ENCODE measurements at regions of chr1 and their contacts with region 1.

Region 1: DNA sequence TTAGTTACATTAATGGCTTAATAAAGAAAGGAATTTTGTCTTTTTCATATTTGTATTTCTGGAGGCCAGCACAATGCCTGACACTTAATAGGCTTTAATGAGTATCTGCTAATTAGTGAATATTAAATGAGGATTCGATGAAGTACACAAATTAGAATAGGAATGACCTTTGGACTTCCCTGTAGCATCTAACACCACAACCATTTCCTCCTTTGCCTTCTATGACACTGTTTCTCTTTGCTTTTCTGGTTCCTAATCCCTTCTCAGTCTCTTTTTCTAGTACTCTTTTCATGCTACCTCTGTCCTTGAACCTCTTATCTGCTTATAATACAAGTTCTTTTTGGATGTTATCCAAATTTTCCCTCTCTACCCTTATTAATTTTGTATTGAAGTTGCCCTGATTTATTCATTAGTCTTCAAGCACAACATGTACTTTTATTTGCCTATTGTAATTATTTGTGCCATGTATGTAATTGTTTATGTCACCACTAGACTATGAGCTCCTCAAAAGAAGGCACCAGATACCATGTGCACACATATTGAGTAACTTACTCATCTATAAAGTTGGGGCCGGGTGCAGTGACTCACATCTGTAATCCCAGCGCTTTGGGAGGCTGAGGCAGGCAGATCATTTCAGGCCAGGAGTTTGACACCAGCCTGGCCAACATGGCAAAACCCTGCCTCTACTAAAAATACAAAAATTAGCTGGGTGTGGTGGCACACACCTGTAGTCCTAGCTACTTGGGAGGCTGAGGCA is 23.8 kb downstream of the RPS27 start:
- DNase-seq: peak in 4 of 7 donors; percentile 30 to 61 (median 43)
- H3K4me3 ChIP-seq: no peak overlapping the region
- H3K27ac ChIP-seq: no peak overlapping the region
- H3K4me1 ChIP-seq: no peaks in the 10 kb centered on the region
- H3K27me3 ChIP-seq: no peaks in the 10 kb centered on the region
- CTCF ChIP-seq: peak in 3 of 6 experiments; percentile 8 to 22 (median 16)
- POLR2A ChIP-seq: no peak

Region 2: GRCh38 chr1:153790966-153791647 is 223.2 kb before region 1 on chr1:
- intact Hi-C with region 1: no loop called
- DNase-seq: peak in 3 of 7 donors; percentile 35 to 47 (median 45)
- H3K4me3 ChIP-seq: peak overlapping the region in 1 of 4 donors; percentile 28
- H3K27ac ChIP-seq: peak overlapping the region; percentile 57 to 92 (median 74)
- H3K4me1 ChIP-seq: peaks cover 0 to 18% of the 10 kb centered on the region in 2 donors
- H3K27me3 ChIP-seq: no peaks in the 10 kb centered on the region
- CTCF ChIP-seq: no peak
- POLR2A ChIP-seq: no peak

Region 3: DNA sequence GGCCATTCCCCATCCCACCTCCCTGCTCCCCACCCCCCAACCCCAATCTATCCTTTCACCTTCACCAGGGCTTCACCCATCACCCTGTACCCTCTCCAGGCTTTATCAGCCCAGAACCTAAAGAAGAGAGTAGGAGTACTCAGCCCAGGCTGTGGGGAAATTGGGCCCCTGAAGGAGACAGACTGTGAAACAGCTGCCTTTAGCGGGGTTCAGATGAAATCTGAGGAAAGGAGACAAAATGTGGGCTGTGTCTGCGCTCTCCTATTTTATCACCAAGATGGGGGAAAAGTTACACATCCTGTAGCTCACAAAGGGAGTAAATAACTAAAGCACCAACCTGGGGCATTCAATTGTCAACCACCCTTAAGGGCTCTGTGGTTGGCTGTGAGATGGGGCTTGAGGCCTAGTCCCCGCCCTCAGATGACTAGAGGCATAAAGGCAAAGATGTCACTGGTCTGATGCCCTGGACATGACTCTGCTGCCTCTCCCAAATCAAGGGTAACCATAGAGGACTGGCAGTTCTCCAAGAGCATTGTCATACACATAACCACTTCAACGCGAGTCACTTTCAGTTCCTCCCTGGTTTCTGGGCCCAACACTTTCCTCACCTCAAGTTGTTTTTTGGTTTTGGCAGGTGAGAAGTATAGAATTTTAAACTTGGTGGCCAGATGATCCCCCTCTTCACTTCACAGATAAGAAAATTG is 209.1 kb before region 1 on chr1:
- intact Hi-C with region 1: no loop called
- DNase-seq: peak; percentile 60 to 87 (median 81)
- H3K4me3 ChIP-seq: no peak overlapping the region
- H3K27ac ChIP-seq: peak overlapping the region in 3 of 5 donors; percentile 15 to 51 (median 29)
- H3K4me1 ChIP-seq: peaks cover 0 to 20% of the 10 kb centered on the region in 2 donors
- H3K27me3 ChIP-seq: no peaks in the 10 kb centered on the region
- CTCF ChIP-seq: no peak
- POLR2A ChIP-seq: no peak

Region 4: GRCh38 chr1:154145986-154146385 is 131.7 kb after region 1 on chr1:
- intact Hi-C with region 1: loop called in 1 of 2 experiments (anchors 10 kb)
- DNase-seq: no peak
- H3K4me3 ChIP-seq: no peak overlapping the region
- H3K27ac ChIP-seq: no peak overlapping the region
- H3K4me1 ChIP-seq: peaks cover 0 to 3% of the 10 kb centered on the region in 2 donors
- H3K27me3 ChIP-seq: no peaks in the 10 kb centered on the region
- CTCF ChIP-seq: peak; percentile 15 to 41 (median 28)
- POLR2A ChIP-seq: no peak

Measured in adrenal gland (tissue), 19 donors.